CD8-positive, alpha-beta T cell (primary cell): ENCODE measurements at regions of chr13 and their contacts with region 1.

Region 1: GRCh38 chr13:42926555-42926954 is 65.5 kb downstream of the EPSTI1 start:
- DNase-seq: no peak
- ATAC-seq: no peak
- H3K4me3 ChIP-seq: no peak overlapping the region
- H3K4me3 Mint-ChIP-seq: no peak overlapping the region
- H3K27ac ChIP-seq: no peak overlapping the region
- H3K27ac Mint-ChIP-seq: peak overlapping the region; percentile 19
- H3K4me1 ChIP-seq: no peaks in the 10 kb centered on the region
- H3K4me1 Mint-ChIP-seq: no peaks in the 10 kb centered on the region
- H3K27me3 ChIP-seq: no peaks in the 10 kb centered on the region
- H3K27me3 Mint-ChIP-seq: no peaks in the 10 kb centered on the region
- CTCF ChIP-seq: no peak

Region 2: GRCh38 chr13:42078128-42078808 is 848.3 kb before region 1 on chr13:
- CTCF ChIA-PET with region 1: no interaction called
- POLR2A ChIA-PET with region 1: no interaction called
- intact Hi-C with region 1: no loop called
- DNase-seq: peak in 1 of 9 experiments; percentile 3
- ATAC-seq: no peak
- H3K4me3 ChIP-seq: no peak overlapping the region
- H3K4me3 Mint-ChIP-seq: no peak overlapping the region
- H3K27ac ChIP-seq: no peak overlapping the region
- H3K27ac Mint-ChIP-seq: no peak overlapping the region
- H3K4me1 ChIP-seq: no peaks in the 10 kb centered on the region
- H3K4me1 Mint-ChIP-seq: peaks cover 11% of the 10 kb centered on the region
- H3K27me3 ChIP-seq: no peaks in the 10 kb centered on the region
- H3K27me3 Mint-ChIP-seq: no peaks in the 10 kb centered on the region
- CTCF ChIP-seq: no peak

Region 3: GRCh38 chr13:42875475-42876269 is 50.9 kb before region 1 on chr13:
- CTCF ChIA-PET with region 1: no interaction called
- POLR2A ChIA-PET with region 1: no interaction called
- intact Hi-C with region 1: loop called in 1 of 2 experiments (anchors 5 kb)
- DNase-seq: no peak
- ATAC-seq: no peak
- H3K4me3 ChIP-seq: no peak overlapping the region
- H3K4me3 Mint-ChIP-seq: no peak overlapping the region
- H3K27ac ChIP-seq: no peak overlapping the region
- H3K27ac Mint-ChIP-seq: no peak overlapping the region
- H3K4me1 ChIP-seq: no peaks in the 10 kb centered on the region
- H3K4me1 Mint-ChIP-seq: no peaks in the 10 kb centered on the region
- H3K27me3 ChIP-seq: no peaks in the 10 kb centered on the region
- H3K27me3 Mint-ChIP-seq: peaks cover 18% of the 10 kb centered on the region
- CTCF ChIP-seq: no peak